Caco-2 (cell line): ENCODE measurements at regions of chr10 and their contacts with region 1.

Region 1: GRCh38 chr10:115335366-115335765 is 242.2 kb downstream of the ATRNL1 start:
- DNase-seq: no peak
- H3K4me3 ChIP-seq: no peak overlapping the region
- H3K4me3 Mint-ChIP-seq: no peak overlapping the region
- H3K27ac Mint-ChIP-seq: no peak overlapping the region
- H3K4me1 ChIP-seq: no peaks in the 10 kb centered on the region
- H3K4me1 Mint-ChIP-seq: no peaks in the 10 kb centered on the region
- H3K27me3 ChIP-seq: no peaks in the 10 kb centered on the region
- H3K27me3 Mint-ChIP-seq: peaks cover 8% of the 10 kb centered on the region
- CTCF ChIP-seq: no peak

Region 2: GRCh38 chr10:115026056-115026745 is 309.2 kb before region 1 on chr10:
- CTCF ChIA-PET with region 1: no interaction called
- POLR2A ChIA-PET with region 1: no interaction called
- intact Hi-C with region 1: no loop called
- DNase-seq: no peak
- H3K4me3 ChIP-seq: no peak overlapping the region
- H3K4me3 Mint-ChIP-seq: no peak overlapping the region
- H3K27ac Mint-ChIP-seq: no peak overlapping the region
- H3K4me1 ChIP-seq: no peaks in the 10 kb centered on the region
- H3K4me1 Mint-ChIP-seq: no peaks in the 10 kb centered on the region
- H3K27me3 ChIP-seq: no peaks in the 10 kb centered on the region
- H3K27me3 Mint-ChIP-seq: peaks cover 6% of the 10 kb centered on the region
- CTCF ChIP-seq: peak in 1 of 2 experiments; percentile 15

Region 3: DNA sequence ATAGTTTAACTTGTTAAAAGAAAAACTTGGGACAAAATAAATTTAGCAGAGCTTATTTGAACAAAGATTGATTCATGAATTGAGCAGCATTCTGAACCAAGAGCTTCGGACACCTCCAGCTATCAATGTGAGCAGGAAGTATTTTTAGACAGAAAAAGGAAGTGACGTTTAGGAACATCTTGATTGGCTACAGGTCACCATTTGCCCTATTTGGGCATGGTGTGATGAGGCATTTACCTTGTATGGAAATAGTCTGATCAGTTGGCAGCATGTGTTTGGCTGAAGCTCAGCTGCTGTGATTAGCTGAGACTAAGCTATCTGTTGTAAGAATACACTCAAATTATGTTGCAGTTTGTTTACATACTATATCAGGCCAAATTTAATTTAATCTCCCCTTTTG is 57.1 kb before region 1 on chr10:
- CTCF ChIA-PET with region 1: no interaction called
- POLR2A ChIA-PET with region 1: no interaction called
- intact Hi-C with region 1: loop called (anchors 2 kb)
- DNase-seq: no peak
- H3K4me3 ChIP-seq: no peak overlapping the region
- H3K4me3 Mint-ChIP-seq: no peak overlapping the region
- H3K27ac Mint-ChIP-seq: no peak overlapping the region
- H3K4me1 ChIP-seq: no peaks in the 10 kb centered on the region
- H3K4me1 Mint-ChIP-seq: no peaks in the 10 kb centered on the region
- H3K27me3 ChIP-seq: no peaks in the 10 kb centered on the region
- H3K27me3 Mint-ChIP-seq: no peaks in the 10 kb centered on the region
- CTCF ChIP-seq: no peak

Region 4: DNA sequence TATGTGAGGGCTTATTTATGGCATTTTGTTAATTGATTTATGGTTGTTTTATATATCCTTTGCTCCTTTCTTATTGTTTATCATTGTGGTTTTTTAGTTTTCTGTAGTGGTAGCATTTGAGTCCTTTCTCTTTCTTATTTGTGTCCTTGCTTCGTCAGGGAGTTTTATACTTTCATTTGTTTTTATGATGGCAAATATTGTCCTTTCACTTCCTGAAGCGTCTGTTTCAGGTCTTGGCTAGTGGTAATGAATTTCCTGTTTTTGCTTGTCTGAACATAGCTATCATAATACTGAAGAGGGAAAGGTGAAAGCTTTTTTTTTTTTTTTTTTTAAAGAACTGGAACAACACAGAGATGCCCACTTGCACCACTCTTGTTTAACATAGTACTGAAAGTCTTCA is 14.0 kb before region 1 on chr10:
- CTCF ChIA-PET with region 1: no interaction called
- POLR2A ChIA-PET with region 1: no interaction called
- intact Hi-C with region 1: no loop called
- DNase-seq: no peak
- H3K4me3 ChIP-seq: no peak overlapping the region
- H3K4me3 Mint-ChIP-seq: no peak overlapping the region
- H3K27ac Mint-ChIP-seq: no peak overlapping the region
- H3K4me1 ChIP-seq: no peaks in the 10 kb centered on the region
- H3K4me1 Mint-ChIP-seq: no peaks in the 10 kb centered on the region
- H3K27me3 ChIP-seq: no peaks in the 10 kb centered on the region
- H3K27me3 Mint-ChIP-seq: no peaks in the 10 kb centered on the region
- CTCF ChIP-seq: no peak